ENCODE measurements at regions of chr5 and their contacts with region 1.

Region 1: DNA sequence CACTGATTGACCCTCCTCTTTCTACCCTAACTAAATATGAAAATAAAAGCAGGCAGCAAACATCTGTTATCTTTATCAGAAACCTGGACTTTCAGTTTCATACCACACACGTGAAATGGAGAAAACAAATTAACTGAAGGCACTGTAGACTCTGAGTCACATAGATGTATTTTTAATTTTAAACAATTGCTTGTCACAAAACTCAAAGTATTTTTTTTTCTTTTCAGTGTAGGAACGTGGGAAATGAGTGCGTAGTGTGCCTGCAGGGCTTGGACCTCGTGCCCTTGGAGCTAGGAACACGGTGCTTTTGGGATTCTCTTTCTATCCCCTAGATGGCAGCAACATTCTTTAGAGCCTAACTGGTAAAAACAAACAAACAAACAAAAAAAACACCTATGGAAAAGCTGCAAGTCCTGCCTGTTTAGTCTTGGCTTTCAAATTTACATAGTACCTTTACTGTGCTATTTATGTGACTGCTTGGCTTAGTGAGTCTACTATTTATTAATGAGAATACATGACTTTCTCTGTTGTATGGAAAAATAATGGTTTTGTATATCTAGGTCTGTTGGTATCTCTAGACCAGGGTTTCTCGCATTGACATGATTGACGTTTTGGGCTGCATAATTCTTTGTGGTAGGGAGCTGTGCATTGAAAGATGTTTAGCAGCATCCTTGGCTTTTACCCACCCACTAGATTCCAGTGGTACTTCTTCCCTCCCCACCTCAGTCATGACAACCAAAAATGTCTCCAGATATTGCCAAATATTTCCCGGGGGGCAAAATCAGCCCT is 16.8 kb upstream of the ACTBL2 start:
- DNase-seq: peak; percentile 94
- H3K4me3 ChIP-seq: no peak overlapping the region
- H3K27ac ChIP-seq: no peak overlapping the region
- H3K4me1 ChIP-seq: peaks cover 37% of the 10 kb centered on the region
- H3K27me3 ChIP-seq: no peaks in the 10 kb centered on the region
- CTCF ChIP-seq: peak; percentile 62 to 66
- POLR2A ChIP-seq: no peak

Region 2: DNA sequence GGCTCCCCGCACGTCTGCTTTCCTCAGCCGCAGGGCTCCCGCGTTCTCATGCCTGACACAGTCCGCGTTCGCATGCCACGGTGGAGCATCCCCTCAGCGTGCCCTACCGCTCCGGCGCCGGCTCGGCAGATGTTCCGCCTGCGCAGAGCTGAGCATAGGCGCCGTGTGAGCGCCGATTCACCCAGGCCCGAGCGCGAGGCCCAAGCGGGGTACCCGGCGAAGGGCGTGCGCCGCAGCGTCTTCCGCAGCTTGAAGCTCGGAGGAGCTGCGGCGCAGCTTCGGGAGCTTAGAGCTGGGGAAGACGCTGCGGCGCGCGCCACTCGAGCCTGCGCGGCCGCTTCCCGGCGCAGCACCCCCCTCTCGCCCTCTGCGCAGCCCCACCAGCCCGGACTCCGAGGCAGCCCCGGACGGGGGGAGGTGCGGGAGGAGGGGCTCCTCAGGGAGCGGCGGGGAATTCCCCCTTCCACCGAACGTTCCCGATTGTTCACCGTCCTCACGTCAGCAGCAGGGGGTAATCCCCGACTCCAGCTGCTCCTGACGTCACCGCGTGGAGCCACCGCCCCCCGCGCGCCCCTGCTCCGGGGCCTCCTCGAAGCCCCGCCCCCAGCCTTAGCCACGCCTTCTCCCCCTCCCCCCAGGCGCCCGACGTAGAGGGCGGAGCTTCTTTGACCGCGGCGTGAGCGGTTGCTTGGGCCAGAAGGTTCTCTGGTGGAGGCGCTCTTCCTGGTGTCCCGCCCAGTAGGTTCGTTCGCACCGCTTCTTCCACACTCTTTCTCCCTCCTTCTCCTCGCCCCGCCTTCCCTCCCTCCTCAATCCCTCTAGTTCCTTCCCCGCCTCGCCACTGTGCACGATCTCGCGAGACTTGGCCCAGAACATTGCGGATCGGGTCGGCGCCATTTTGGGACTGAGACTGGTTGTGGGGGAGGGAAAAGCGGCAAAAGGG is 326.0 kb before region 1 on chr5 and contains the start of gene GPBP1:
- CTCF ChIA-PET with region 1: no interaction called
- POLR2A ChIA-PET with region 1: no interaction called
- dilution Hi-C with region 1: no loop called
- intact Hi-C with region 1: loop called (anchors 10 kb)
- DNase-seq: peak; percentile 99
- H3K4me3 ChIP-seq: peak within 1 kb of the TSS; percentile 77 to 96 (median 86)
- H3K27ac ChIP-seq: peak within 1 kb of the TSS; percentile 94
- H3K4me1 ChIP-seq: peaks cover 32% of the 10 kb centered on the region
- H3K27me3 ChIP-seq: no peaks in the 10 kb centered on the region
- CTCF ChIP-seq: peak in 1 of 2 donors; percentile 1
- POLR2A ChIP-seq: no peak
- total RNA-seq, gene GPBP1: 48.2 and 57.4 TPM in 2 replicates

Region 3: GRCh38 chr5:57383093-57383861 is 116.2 kb before region 1 on chr5:
- CTCF ChIA-PET with region 1: interaction called, 10 read pairs
- POLR2A ChIA-PET with region 1: interaction called, 3 read pairs
- dilution Hi-C with region 1: no loop called
- intact Hi-C with region 1: loop called (anchors 1 kb)
- DNase-seq: peak; percentile 96
- H3K4me3 ChIP-seq: peak overlapping the region in 1 of 3 experiments; percentile 40
- H3K27ac ChIP-seq: peak overlapping the region; percentile 94
- H3K4me1 ChIP-seq: peaks cover 19% of the 10 kb centered on the region
- H3K27me3 ChIP-seq: no peaks in the 10 kb centered on the region
- CTCF ChIP-seq: peak in 1 of 2 donors; percentile 33
- POLR2A ChIP-seq: peak; percentile 60

Region 4: DNA sequence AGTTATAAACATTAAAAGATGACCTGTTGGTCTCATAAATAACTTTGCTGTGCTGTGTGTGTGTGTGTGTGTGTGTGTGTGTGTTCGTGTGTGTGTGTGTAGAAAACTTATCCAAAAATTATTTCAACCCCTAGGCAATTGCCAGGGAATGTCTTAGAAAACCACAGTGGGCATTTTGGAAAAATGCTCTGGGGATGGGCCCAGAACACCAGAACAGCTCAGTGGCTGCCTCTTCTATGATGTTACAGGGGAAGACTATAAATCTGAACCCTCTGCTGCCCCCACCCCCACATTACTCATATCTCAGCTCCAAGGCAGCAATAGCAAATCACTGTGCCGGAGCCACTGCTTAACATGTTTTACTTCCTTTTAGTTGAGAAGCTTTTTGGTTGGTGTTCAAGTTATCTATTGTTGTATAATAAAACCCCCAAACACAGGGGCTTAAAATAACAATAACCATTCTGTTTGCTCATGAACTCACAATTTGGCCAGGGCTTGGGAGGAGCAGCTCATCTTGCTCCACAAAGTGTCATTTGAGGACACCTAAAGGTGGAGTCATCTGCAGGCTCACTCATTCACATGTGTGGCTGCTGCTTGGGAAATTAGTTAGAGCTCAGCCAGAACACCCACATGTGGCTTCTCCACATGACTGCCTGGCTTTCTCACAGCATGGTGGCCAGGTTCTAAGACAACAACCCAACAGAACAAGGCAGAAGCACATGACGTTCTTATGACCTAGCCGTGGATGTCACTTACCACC is 57.2 kb before region 1 on chr5:
- CTCF ChIA-PET with region 1: interaction called, 18 read pairs
- POLR2A ChIA-PET with region 1: no interaction called
- dilution Hi-C with region 1: no loop called
- intact Hi-C with region 1: no loop called
- DNase-seq: peak; percentile 73
- H3K4me3 ChIP-seq: no peak overlapping the region
- H3K27ac ChIP-seq: peak overlapping the region; percentile 83
- H3K4me1 ChIP-seq: peaks cover 55% of the 10 kb centered on the region
- H3K27me3 ChIP-seq: no peaks in the 10 kb centered on the region
- CTCF ChIP-seq: no peak
- POLR2A ChIP-seq: no peak

Region 5: DNA sequence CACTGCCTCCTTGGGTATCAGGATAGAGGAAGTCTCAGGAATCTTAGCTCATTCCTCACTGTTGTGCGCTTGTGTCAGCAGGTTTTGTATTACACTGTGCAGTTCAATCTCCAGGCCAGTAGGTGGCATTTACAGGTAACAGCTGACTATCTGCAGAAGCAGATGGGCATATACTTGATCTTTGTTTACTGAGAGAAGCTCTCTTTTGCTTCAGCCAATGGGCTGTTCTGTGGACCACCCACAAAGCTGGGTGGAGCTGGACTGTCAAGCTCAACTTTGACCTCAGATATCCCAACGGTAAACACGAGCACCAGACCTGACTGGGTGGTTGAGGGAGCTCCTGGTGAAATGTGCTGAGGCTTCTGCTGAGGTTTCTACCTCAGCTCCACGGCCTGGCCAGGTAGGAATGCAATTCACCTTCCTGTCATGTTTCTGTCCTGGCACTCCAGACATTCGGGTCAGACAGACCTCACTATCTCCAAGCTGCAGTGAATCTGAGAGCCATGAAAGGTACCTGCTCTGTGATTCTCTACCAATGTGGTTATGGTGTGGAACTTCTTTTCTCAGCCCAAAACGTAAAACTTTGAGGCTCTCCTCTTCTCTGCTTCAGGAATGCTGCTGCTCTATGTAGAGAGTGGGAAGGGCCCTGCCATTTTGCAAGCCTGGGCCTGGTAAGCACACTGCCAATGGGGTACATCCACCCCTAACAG is 151.1 kb after region 1 on chr5:
- CTCF ChIA-PET with region 1: interaction called, 41 read pairs
- POLR2A ChIA-PET with region 1: no interaction called
- dilution Hi-C with region 1: no loop called
- intact Hi-C with region 1: loop called (anchors 5 kb)
- DNase-seq: peak; percentile 61
- H3K4me3 ChIP-seq: no peak overlapping the region
- H3K27ac ChIP-seq: no peak overlapping the region
- H3K4me1 ChIP-seq: peaks cover 5% of the 10 kb centered on the region
- H3K27me3 ChIP-seq: no peaks in the 10 kb centered on the region
- CTCF ChIP-seq: peak; percentile 62 to 83
- POLR2A ChIP-seq: no peak

Region 6: DNA sequence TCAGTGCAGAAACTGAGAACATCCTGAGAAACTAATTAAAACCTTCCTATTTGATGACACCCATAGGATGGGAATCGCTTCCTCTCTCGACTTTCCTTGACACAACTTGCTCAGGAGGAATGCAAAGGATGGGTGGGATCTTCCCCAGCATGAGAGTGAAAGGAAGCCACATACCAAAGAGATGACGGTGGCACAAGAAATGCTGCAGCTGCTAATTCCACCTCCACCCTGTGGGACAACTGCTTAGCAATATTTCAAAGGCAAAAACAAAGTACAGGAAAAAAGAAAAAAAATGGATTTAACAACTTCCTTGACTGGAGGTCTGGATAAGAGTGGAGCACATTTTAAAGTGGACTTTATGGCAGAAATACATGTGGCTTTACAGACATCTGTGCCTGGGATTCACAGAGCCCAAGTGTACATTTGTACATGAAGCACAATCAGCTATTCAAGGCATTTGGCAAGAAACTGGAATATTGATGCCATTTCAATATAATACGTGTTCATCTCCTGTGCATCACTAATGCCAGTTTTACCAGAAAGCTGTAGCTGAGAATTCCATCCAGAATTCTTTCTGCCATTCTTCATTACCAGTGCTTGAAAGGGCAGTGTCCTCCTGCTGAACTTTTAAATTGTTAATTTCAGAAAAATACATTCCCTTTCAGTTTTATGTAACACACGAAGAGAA is 342.4 kb after region 1 on chr5:
- CTCF ChIA-PET with region 1: interaction called, 4 read pairs
- POLR2A ChIA-PET with region 1: no interaction called
- dilution Hi-C with region 1: no loop called
- intact Hi-C with region 1: loop called (anchors 2 kb)
- DNase-seq: peak; percentile 96
- H3K4me3 ChIP-seq: no peak overlapping the region
- H3K27ac ChIP-seq: peak overlapping the region; percentile 90
- H3K4me1 ChIP-seq: peaks cover 66% of the 10 kb centered on the region
- H3K27me3 ChIP-seq: no peaks in the 10 kb centered on the region
- CTCF ChIP-seq: no peak
- POLR2A ChIP-seq: no peak